ENCODE measurements at regions of chr2 and their contacts with region 1.

Region 1: GRCh38 chr2:83143946-83144345 is 1315.1 kb downstream of the SUCLG1 start:
- DNase-seq: no peak
- ATAC-seq: no peak
- H3K4me3 ChIP-seq: no peak overlapping the region
- H3K27ac ChIP-seq: no peak overlapping the region
- H3K4me1 ChIP-seq: no peaks in the 10 kb centered on the region
- H3K27me3 ChIP-seq: no peaks in the 10 kb centered on the region
- CTCF ChIP-seq: no peak
- POLR2A ChIP-seq: no peak
- RAD21 ChIP-seq: no peak

Region 2: GRCh38 chr2:83196225-83196624 is 52.3 kb after region 1 on chr2:
- CTCF ChIA-PET with region 1: no interaction called
- POLR2A ChIA-PET with region 1: no interaction called
- dilution Hi-C with region 1: no loop called
- in situ Hi-C with region 1: no loop called
- intact Hi-C with region 1: no loop called
- DNase-seq: peak; percentile 42
- ATAC-seq: peak; percentile 74
- H3K4me3 ChIP-seq: no peak overlapping the region
- H3K27ac ChIP-seq: no peak overlapping the region
- H3K4me1 ChIP-seq: no peaks in the 10 kb centered on the region
- H3K27me3 ChIP-seq: no peaks in the 10 kb centered on the region
- CTCF ChIP-seq: peak; percentile 79
- POLR2A ChIP-seq: no peak
- RAD21 ChIP-seq: peak; percentile 82

Region 3: GRCh38 chr2:83233301-83233700 is 89.4 kb after region 1 on chr2:
- CTCF ChIA-PET with region 1: no interaction called
- POLR2A ChIA-PET with region 1: no interaction called
- dilution Hi-C with region 1: no loop called
- in situ Hi-C with region 1: loop called (anchors 25 kb)
- intact Hi-C with region 1: no loop called
- DNase-seq: no peak
- ATAC-seq: no peak
- H3K4me3 ChIP-seq: no peak overlapping the region
- H3K27ac ChIP-seq: no peak overlapping the region
- H3K4me1 ChIP-seq: no peaks in the 10 kb centered on the region
- H3K27me3 ChIP-seq: no peaks in the 10 kb centered on the region
- CTCF ChIP-seq: no peak
- POLR2A ChIP-seq: no peak
- RAD21 ChIP-seq: no peak

Region 4: GRCh38 chr2:83420993-83421392 is 277.0 kb after region 1 on chr2:
- CTCF ChIA-PET with region 1: no interaction called
- POLR2A ChIA-PET with region 1: no interaction called
- dilution Hi-C with region 1: no loop called
- in situ Hi-C with region 1: no loop called
- intact Hi-C with region 1: no loop called
- DNase-seq: no peak
- ATAC-seq: no peak
- H3K4me3 ChIP-seq: no peak overlapping the region
- H3K27ac ChIP-seq: no peak overlapping the region
- H3K4me1 ChIP-seq: no peaks in the 10 kb centered on the region
- H3K27me3 ChIP-seq: no peaks in the 10 kb centered on the region
- CTCF ChIP-seq: no peak
- POLR2A ChIP-seq: no peak
- RAD21 ChIP-seq: no peak